ENCODE measurements at regions of chr18 and their contacts with region 1.

Region 1: GRCh38 chr18:48777026-48777743 is 173.6 kb downstream of the SMAD7 start:
- DNase-seq: peak in 1 of 2 donors; percentile 83
- H3K4me3 ChIP-seq: no peak overlapping the region
- H3K27ac ChIP-seq: peak overlapping the region; percentile 94 to 95
- H3K4me1 ChIP-seq: peaks cover 17 to 44% of the 10 kb centered on the region in 2 donors
- H3K27me3 ChIP-seq: no peaks in the 10 kb centered on the region
- CTCF ChIP-seq: peak; percentile 92 to 96 (median 92)

Region 2: GRCh38 chr18:48749768-48750167 is 27.4 kb before region 1 on chr18:
- intact Hi-C with region 1: loop called (anchors 2 kb)
- DNase-seq: peak in 1 of 2 donors; percentile 86
- H3K4me3 ChIP-seq: no peak overlapping the region
- H3K27ac ChIP-seq: peak overlapping the region; percentile 87 to 90
- H3K4me1 ChIP-seq: peaks cover 14 to 27% of the 10 kb centered on the region in 2 donors
- H3K27me3 ChIP-seq: no peaks in the 10 kb centered on the region
- CTCF ChIP-seq: peak in 2 of 3 experiments; percentile 42 to 43

Region 3: DNA sequence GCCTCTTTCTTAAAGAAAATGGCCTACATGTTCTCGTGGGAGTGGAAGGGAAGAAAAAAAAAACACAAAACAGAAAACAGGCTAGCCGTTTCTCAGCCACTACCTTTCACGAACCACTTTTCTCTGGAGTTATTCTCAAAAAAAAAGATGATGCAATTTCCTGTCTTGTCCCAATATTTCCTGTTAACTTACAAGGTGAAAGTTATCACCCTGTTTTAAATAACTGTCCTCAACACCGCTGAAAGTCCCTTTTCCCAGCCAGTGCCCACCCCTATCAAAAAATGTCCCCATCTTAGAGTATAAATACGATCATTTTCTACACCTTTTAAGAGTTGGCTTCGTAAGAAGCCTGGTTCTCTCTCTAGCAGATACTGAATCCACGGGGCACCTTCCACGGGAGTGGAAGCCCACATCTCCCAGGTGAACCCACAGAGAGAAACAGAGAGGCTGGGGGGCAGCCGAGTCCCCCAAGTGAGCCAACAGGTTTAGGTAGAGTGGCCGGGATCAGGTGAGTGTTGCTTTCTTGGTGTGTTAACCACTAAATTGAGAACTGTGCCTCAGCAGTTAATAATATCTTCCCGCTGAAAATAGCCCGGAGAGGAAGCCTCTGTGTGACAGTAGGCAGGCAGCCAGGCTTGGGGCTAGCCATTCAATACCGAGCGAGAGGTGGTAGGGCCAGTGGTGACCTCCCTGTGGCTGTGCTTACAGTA is 157.7 kb after region 1 on chr18:
- intact Hi-C with region 1: loop called (anchors 5 kb)
- DNase-seq: no peak
- H3K4me3 ChIP-seq: peak overlapping the region; percentile 32 to 47
- H3K27ac ChIP-seq: peak overlapping the region; percentile 97 to 99
- H3K4me1 ChIP-seq: peaks cover 65 to 93% of the 10 kb centered on the region in 2 donors
- H3K27me3 ChIP-seq: no peaks in the 10 kb centered on the region
- CTCF ChIP-seq: no peak

Region 4: GRCh38 chr18:48997985-48998831 is 221.0 kb after region 1 on chr18:
- intact Hi-C with region 1: loop called (anchors 5 kb)
- DNase-seq: peak; percentile 81 to 97
- H3K4me3 ChIP-seq: peak overlapping the region in 1 of 2 donors; percentile 17
- H3K27ac ChIP-seq: peak overlapping the region; percentile 87 to 88
- H3K4me1 ChIP-seq: peaks cover 16 to 41% of the 10 kb centered on the region in 2 donors
- H3K27me3 ChIP-seq: no peaks in the 10 kb centered on the region
- CTCF ChIP-seq: no peak

Region 5: GRCh38 chr18:49238433-49239042 is 461.4 kb after region 1 on chr18:
- intact Hi-C with region 1: loop called (anchors 10 kb)
- DNase-seq: no peak
- H3K4me3 ChIP-seq: no peak overlapping the region
- H3K27ac ChIP-seq: no peak overlapping the region
- H3K4me1 ChIP-seq: no peaks in the 10 kb centered on the region
- H3K27me3 ChIP-seq: no peaks in the 10 kb centered on the region
- CTCF ChIP-seq: peak in 2 of 3 experiments; percentile 10 to 44

Measured in ascending aorta (tissue), 2 donors.